Ascending aorta (tissue), 2 donors: ENCODE measurements at regions of chr17 and their contacts with region 1.

Region 1: DNA sequence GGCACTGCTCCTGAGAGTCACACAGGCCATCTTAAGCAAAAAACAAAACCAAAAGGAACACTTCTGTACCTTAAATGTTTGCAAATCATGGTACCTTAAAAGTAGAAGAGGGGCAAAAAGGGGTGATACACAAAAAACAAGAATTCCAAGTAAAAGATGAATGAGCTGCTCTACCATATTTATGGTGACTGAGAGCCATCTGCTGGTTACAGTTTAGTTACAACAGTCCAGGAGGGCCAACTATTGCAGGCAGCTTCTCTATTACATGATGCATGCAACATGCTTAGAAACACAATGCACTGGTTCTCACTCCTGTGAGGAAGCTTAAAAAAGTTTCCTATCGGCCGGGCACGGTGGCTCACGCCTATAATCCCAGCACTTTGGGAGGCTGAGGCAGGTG is 53.5 kb downstream of the STX8 start:
- DNase-seq: no peak
- H3K4me3 ChIP-seq: no peak overlapping the region
- H3K27ac ChIP-seq: no peak overlapping the region
- H3K4me1 ChIP-seq: no peaks in the 10 kb centered on the region
- H3K27me3 ChIP-seq: no peaks in the 10 kb centered on the region
- CTCF ChIP-seq: peak in 2 of 3 experiments; percentile 48 to 59

Region 2: DNA sequence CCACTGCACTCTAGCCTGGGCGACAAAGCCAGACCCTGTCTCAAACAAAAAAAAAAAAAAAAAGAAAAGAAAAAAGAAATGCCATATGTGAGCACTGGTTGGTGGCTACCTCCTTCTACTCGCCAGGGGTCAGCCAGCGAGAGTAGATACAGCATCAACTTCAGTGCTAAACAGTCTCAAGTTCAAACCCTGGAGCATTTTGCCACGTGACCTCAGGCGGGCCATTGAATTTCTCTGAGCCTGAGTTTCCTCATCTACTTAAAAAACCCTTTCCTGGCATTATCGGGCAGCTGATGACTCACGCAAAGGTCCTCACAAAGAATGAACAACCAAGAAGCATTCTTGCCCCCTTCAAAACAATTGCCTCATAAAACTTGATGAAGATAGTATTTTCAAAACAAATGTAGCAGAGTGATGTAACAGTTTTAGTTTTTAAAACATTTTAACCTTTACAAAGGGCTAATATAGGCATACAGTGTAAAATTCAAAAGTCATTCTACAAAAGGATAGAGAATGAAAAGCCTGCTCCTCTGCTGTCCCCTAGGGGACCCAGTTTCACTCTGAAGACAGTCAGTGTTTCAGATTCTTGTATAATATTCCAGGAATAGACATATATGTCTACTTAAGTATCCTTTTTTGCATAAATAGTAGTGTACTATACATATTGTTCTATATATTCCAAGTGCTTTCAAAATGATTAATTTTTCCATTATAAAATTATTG is 1776.2 kb before region 1 on chr17:
- intact Hi-C with region 1: no loop called
- DNase-seq: peak in 1 of 2 donors; percentile 76
- H3K4me3 ChIP-seq: no peak overlapping the region
- H3K27ac ChIP-seq: no peak overlapping the region
- H3K4me1 ChIP-seq: no peaks in the 10 kb centered on the region
- H3K27me3 ChIP-seq: no peaks in the 10 kb centered on the region
- CTCF ChIP-seq: no peak

Region 3: GRCh38 chr17:8991514-8992285 is 530.4 kb before region 1 on chr17:
- intact Hi-C with region 1: loop called (anchors 2 kb)
- DNase-seq: peak in 1 of 2 donors; percentile 85
- H3K4me3 ChIP-seq: no peak overlapping the region
- H3K27ac ChIP-seq: no peak overlapping the region
- H3K4me1 ChIP-seq: no peaks in the 10 kb centered on the region
- H3K27me3 ChIP-seq: no peaks in the 10 kb centered on the region
- CTCF ChIP-seq: peak; percentile 80 to 86 (median 80)

Region 4: DNA sequence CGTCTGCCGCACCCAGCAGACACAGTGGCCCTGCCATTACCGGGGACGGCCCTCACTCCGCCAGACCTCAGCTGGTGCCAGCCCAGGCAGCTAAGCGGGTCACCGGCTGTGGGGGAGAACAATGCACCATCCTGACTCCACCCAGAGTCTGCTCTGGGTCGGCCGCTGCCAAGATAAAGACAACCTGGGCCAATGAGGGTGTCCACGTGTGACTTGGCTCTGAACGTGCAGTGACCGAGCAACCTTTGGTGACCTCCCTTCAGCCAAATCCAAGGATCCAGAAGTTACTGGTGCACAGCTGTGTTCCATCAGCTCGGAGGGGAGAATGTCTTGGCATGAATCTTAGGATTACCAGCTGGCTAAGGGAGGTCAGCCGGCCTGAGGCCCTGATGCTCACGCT is 344.9 kb before region 1 on chr17:
- intact Hi-C with region 1: loop called (anchors 10 kb)
- DNase-seq: no peak
- H3K4me3 ChIP-seq: no peak overlapping the region
- H3K27ac ChIP-seq: peak overlapping the region; percentile 4 to 33
- H3K4me1 ChIP-seq: peaks cover 0 to 28% of the 10 kb centered on the region in 2 donors
- H3K27me3 ChIP-seq: no peaks in the 10 kb centered on the region
- CTCF ChIP-seq: no peak